WTC11 (cell line): ENCODE measurements at regions of chr20 and their contacts with region 1.

Region 1: GRCh38 chr20:44310664-44311639 is at the start of gene FITM2:
- DNase-seq: peak; percentile 98
- ATAC-seq: peak; percentile 94
- H3K4me3 Mint-ChIP-seq: peak within 1 kb of the TSS; percentile 81
- H3K27ac Mint-ChIP-seq: no peak within 1 kb of the TSS
- H3K4me1 Mint-ChIP-seq: peaks cover 10% of the 10 kb centered on the region
- H3K27me3 Mint-ChIP-seq: peaks cover 32% of the 10 kb centered on the region
- CTCF ChIP-seq: peak; percentile 69
- total RNA-seq, gene FITM2: 2.0 to 2.5 TPM (median 2.4 TPM) in 3 replicates

Region 2: GRCh38 chr20:43699941-43700565 is 610.9 kb before region 1 on chr20:
- CTCF ChIA-PET with region 1: no interaction called
- POLR2A ChIA-PET with region 1: no interaction called
- DNase-seq: no peak
- ATAC-seq: no peak
- H3K4me3 Mint-ChIP-seq: no peak overlapping the region
- H3K27ac Mint-ChIP-seq: no peak overlapping the region
- H3K4me1 Mint-ChIP-seq: no peaks in the 10 kb centered on the region
- H3K27me3 Mint-ChIP-seq: no peaks in the 10 kb centered on the region
- CTCF ChIP-seq: no peak

Region 3: GRCh38 chr20:44222633-44223368 is 88.2 kb before region 1 on chr20:
- CTCF ChIA-PET with region 1: interaction called, 85 read pairs
- POLR2A ChIA-PET with region 1: no interaction called
- DNase-seq: peak; percentile 64
- ATAC-seq: peak; percentile 94
- H3K4me3 Mint-ChIP-seq: no peak overlapping the region
- H3K27ac Mint-ChIP-seq: no peak overlapping the region; the same call in 1 of the 2 replicates
- H3K4me1 Mint-ChIP-seq: peaks cover 12% of the 10 kb centered on the region
- H3K27me3 Mint-ChIP-seq: no peaks in the 10 kb centered on the region
- CTCF ChIP-seq: no peak; the same call in 1 of the 2 replicates

Region 4: DNA sequence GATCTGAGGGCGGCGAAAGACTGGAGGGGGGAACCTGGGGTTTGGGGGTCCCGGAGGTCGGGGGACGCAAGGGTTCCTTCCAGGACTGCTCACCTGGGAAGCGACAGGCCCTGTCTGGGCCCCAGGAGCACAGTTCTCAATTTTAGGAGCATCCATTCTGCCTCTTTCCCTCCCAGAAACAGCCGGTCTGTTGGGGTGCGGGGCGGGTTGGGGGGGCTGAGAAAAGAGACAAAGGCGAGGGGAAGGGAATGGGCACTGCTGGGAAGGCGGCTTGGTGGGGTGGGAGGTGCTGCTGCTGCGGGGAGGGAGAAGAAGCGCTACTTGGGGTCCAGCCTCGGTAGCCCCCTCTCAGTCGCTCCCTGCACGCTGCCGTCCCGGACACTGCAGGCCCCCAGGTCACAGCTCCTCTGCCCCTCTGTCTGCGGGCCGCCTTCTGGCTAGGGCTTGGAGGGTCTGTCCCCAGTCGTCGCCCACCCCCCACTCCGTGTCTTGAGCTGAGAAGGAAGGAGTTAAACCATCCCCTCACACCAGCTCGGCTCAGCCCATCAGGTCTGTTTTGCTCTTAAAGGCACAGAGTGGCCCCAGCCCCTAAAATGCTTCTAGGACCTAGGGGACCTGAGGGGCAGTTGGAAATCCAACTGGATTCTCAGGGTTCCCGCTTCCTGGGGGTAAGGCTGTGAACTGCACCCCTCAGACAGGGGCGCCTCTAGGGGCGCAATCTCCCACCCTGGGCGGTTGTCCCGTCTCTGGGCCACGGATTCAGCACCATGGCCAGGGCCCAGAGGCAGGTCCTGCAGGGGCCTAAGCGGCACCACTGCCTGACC is 63.2 kb before region 1 on chr20:
- CTCF ChIA-PET with region 1: interaction called, 22 read pairs
- POLR2A ChIA-PET with region 1: no interaction called
- DNase-seq: peak; percentile 91
- ATAC-seq: peak; percentile 92
- H3K4me3 Mint-ChIP-seq: peak overlapping the region; percentile 78
- H3K27ac Mint-ChIP-seq: no peak overlapping the region
- H3K4me1 Mint-ChIP-seq: peaks cover 7% of the 10 kb centered on the region; the same call in 1 of the 2 replicates
- H3K27me3 Mint-ChIP-seq: peaks cover 13% of the 10 kb centered on the region
- CTCF ChIP-seq: peak; percentile 55; the same call in 1 of the 2 replicates

Region 5: GRCh38 chr20:44271915-44272663 is 38.9 kb before region 1 on chr20:
- CTCF ChIA-PET with region 1: interaction called, 13 read pairs
- POLR2A ChIA-PET with region 1: no interaction called
- DNase-seq: peak; percentile 71
- ATAC-seq: peak; percentile 95
- H3K4me3 Mint-ChIP-seq: no peak overlapping the region
- H3K27ac Mint-ChIP-seq: no peak overlapping the region
- H3K4me1 Mint-ChIP-seq: no peaks in the 10 kb centered on the region
- H3K27me3 Mint-ChIP-seq: no peaks in the 10 kb centered on the region
- CTCF ChIP-seq: peak; percentile 34; the same call in 1 of the 2 replicates

Region 6: GRCh38 chr20:44326391-44327159 is 15.6 kb after region 1 on chr20:
- CTCF ChIA-PET with region 1: interaction called, 32 read pairs
- POLR2A ChIA-PET with region 1: interaction called, 4 read pairs
- DNase-seq: peak; percentile 72
- ATAC-seq: peak; percentile 65
- H3K4me3 Mint-ChIP-seq: peak overlapping the region; percentile 38
- H3K27ac Mint-ChIP-seq: no peak overlapping the region
- H3K4me1 Mint-ChIP-seq: peaks cover 15% of the 10 kb centered on the region
- H3K27me3 Mint-ChIP-seq: no peaks in the 10 kb centered on the region
- CTCF ChIP-seq: no peak

Region 7: DNA sequence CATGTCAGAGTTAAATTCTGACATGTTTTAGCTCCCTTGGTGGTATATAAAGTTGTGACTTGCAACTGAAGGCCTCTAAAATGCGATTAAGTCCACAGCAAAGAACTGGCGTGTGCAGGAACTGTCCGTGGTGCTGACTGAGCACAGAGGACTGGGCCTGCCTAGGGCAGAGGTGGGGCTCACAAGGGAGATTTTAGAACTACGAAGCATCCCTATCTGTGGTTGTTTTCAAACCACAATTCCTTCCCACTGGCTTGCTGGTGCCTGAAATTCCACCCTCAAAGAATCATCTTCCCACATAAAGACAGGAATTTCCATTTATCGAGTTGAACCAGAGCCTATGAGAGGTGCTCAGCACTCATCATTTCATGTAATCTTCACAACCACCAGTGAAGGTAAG is 469.3 kb after region 1 on chr20:
- CTCF ChIA-PET with region 1: no interaction called
- POLR2A ChIA-PET with region 1: no interaction called
- DNase-seq: peak; percentile 75
- ATAC-seq: peak; percentile 60
- H3K4me3 Mint-ChIP-seq: no peak overlapping the region
- H3K27ac Mint-ChIP-seq: no peak overlapping the region
- H3K4me1 Mint-ChIP-seq: peaks cover 13% of the 10 kb centered on the region
- H3K27me3 Mint-ChIP-seq: no peaks in the 10 kb centered on the region
- CTCF ChIP-seq: no peak